T-cell (primary cell): ENCODE measurements at regions of chr16 and their contacts with region 1.

Region 1: DNA sequence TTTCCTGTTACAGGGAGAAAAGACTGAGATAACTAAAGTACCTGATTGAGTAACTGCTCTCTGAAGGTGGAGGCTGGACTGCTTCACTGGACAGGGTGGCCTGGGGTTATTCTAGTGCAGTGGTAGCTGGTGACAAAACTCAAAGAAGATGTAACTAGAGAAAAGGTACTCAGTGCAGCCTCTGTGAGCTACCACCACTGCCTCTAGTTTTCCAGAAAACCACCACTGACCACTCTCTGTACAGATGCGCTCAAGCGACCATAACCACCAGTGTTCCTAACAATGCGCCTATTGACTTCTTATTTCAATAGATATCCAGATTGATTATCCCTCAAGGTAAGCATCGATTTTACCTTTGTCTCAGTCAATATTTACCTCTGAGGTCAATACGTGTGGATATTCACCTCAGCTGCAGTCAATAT is 492.2 kb downstream of the WWOX start:
- DNase-seq: no peak
- ATAC-seq: no peak
- H3K4me3 ChIP-seq: no peak overlapping the region
- H3K4me3 Mint-ChIP-seq: no peak overlapping the region
- H3K27ac ChIP-seq: no peak overlapping the region
- H3K27ac Mint-ChIP-seq: no peak overlapping the region
- H3K4me1 ChIP-seq: no peaks in the 10 kb centered on the region
- H3K4me1 Mint-ChIP-seq: no peaks in the 10 kb centered on the region
- H3K27me3 ChIP-seq: no peaks in the 10 kb centered on the region
- H3K27me3 Mint-ChIP-seq: no peaks in the 10 kb centered on the region

Region 2: GRCh38 chr16:78331731-78332130 is 260.0 kb before region 1 on chr16:
- CTCF ChIA-PET with region 1: no interaction called
- POLR2A ChIA-PET with region 1: interaction called in 1 of 2 experiments, 10 read pairs
- DNase-seq: no peak
- ATAC-seq: no peak
- H3K4me3 ChIP-seq: no peak overlapping the region
- H3K4me3 Mint-ChIP-seq: no peak overlapping the region
- H3K27ac ChIP-seq: no peak overlapping the region
- H3K27ac Mint-ChIP-seq: no peak overlapping the region
- H3K4me1 ChIP-seq: no peaks in the 10 kb centered on the region
- H3K4me1 Mint-ChIP-seq: no peaks in the 10 kb centered on the region
- H3K27me3 ChIP-seq: no peaks in the 10 kb centered on the region
- H3K27me3 Mint-ChIP-seq: no peaks in the 10 kb centered on the region

Region 3: DNA sequence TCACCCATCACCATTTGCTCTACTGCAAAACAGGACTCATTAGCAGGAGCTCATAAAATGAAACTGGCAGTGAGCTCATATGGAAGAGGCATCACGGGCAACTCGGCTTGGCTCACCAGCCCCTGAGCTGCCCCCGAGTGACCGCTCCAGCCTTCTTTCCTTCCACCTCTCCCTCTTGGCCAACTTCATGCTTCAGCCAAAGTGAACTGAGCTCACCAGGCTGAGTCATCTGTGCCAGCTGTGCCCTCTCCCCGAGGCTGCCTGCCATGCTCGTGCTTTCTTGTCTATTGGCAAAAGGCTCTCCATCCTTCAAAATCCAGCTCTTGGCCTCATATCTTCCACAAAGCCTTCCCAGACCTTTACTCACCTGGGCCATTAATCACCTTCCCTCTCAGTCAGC is 100.8 kb before region 1 on chr16:
- CTCF ChIA-PET with region 1: no interaction called
- POLR2A ChIA-PET with region 1: no interaction called
- DNase-seq: no peak
- ATAC-seq: no peak
- H3K4me3 ChIP-seq: no peak overlapping the region
- H3K4me3 Mint-ChIP-seq: no peak overlapping the region
- H3K27ac ChIP-seq: no peak overlapping the region
- H3K27ac Mint-ChIP-seq: no peak overlapping the region
- H3K4me1 ChIP-seq: no peaks in the 10 kb centered on the region
- H3K4me1 Mint-ChIP-seq: no peaks in the 10 kb centered on the region
- H3K27me3 ChIP-seq: no peaks in the 10 kb centered on the region
- H3K27me3 Mint-ChIP-seq: no peaks in the 10 kb centered on the region

Region 4: GRCh38 chr16:78563905-78564304 is 27.8 kb before region 1 on chr16:
- CTCF ChIA-PET with region 1: no interaction called
- POLR2A ChIA-PET with region 1: no interaction called
- DNase-seq: no peak
- ATAC-seq: no peak
- H3K4me3 ChIP-seq: no peak overlapping the region
- H3K4me3 Mint-ChIP-seq: no peak overlapping the region
- H3K27ac ChIP-seq: no peak overlapping the region
- H3K27ac Mint-ChIP-seq: no peak overlapping the region
- H3K4me1 ChIP-seq: peaks cover 0 to 8% of the 10 kb centered on the region in 2 experiments
- H3K4me1 Mint-ChIP-seq: peaks cover 12 to 16% (median 12%) of the 10 kb centered on the region in 3 donors
- H3K27me3 ChIP-seq: no peaks in the 10 kb centered on the region
- H3K27me3 Mint-ChIP-seq: no peaks in the 10 kb centered on the region